ENCODE measurements at regions of chr19 and their contacts with region 1.

Region 1: DNA sequence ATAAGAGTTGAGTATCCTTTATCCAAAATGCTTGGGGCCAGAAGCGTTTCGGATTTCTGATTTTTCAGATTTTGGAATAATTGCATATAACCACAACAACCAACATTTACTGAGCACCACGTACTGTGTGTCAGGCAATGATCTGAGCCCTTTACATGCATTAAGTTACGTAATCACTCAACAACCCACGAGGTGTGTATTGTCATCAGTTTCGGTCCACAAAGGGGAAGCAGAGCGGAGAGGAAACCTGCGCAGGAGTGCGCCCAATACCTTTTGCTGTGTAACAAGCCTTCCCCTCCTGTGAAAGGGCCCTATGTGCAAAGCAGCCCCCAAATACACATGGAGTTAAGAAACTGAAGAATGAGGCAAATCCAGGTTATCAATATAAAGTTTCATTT is 20.7 kb upstream of the NLRP12 start:
- DNase-seq: peak in 1 of 9 experiments; percentile 32
- ATAC-seq: no peak
- H3K4me3 ChIP-seq: no peak overlapping the region
- H3K4me3 Mint-ChIP-seq: no peak overlapping the region
- H3K27ac ChIP-seq: no peak overlapping the region
- H3K27ac Mint-ChIP-seq: no peak overlapping the region
- H3K4me1 ChIP-seq: no peaks in the 10 kb centered on the region
- H3K4me1 Mint-ChIP-seq: peaks cover 5% of the 10 kb centered on the region
- H3K27me3 ChIP-seq: peaks cover 0 to under 1% of the 10 kb centered on the region in 2 experiments
- H3K27me3 Mint-ChIP-seq: peaks cover 21% of the 10 kb centered on the region
- CTCF ChIP-seq: no peak

Region 2: DNA sequence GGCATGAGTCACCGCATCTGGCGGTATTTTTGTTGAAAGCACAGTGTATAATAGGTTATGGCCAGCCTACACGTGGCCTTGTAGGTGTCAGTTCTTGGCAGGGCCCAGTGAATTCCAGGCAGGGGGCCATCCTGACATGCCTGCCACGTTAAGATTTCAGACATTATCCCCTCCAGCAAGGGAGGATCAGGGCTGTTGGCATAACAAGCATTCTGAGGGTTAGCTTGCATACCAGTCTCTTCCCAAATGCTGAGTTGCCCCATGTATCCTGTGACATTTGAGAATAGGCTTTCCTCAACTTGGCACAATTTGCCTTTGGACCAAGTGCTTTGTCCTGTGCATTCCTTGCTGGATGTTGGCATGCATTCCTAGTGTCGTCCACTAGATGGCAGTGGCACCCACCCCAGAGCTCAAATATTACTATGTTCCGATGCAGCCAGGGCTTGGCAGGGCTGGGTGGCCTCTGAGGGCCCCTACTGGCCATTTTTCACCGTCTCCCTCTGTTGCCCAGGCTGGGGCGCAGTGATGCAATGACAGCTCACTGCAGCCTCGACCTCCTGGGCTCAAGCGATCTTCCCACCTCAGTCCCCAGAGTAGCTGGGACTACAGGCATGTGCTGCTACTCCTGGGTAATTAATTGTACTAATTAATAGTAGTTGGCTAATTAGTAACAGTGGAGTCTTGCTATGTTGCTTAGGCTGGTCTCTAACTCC is 52.0 kb before region 1 on chr19:
- CTCF ChIA-PET with region 1: interaction called, 3 read pairs
- POLR2A ChIA-PET with region 1: no interaction called
- intact Hi-C with region 1: loop called in 1 of 2 experiments (anchors 1 kb)
- DNase-seq: peak; percentile 46 to 81 (median 68)
- ATAC-seq: peak; percentile 100
- H3K4me3 ChIP-seq: no peak overlapping the region
- H3K4me3 Mint-ChIP-seq: no peak overlapping the region
- H3K27ac ChIP-seq: no peak overlapping the region
- H3K27ac Mint-ChIP-seq: no peak overlapping the region
- H3K4me1 ChIP-seq: no peaks in the 10 kb centered on the region
- H3K4me1 Mint-ChIP-seq: no peaks in the 10 kb centered on the region
- H3K27me3 ChIP-seq: no peaks in the 10 kb centered on the region
- H3K27me3 Mint-ChIP-seq: peaks cover 2% of the 10 kb centered on the region
- CTCF ChIP-seq: peak; percentile 91

Region 3: DNA sequence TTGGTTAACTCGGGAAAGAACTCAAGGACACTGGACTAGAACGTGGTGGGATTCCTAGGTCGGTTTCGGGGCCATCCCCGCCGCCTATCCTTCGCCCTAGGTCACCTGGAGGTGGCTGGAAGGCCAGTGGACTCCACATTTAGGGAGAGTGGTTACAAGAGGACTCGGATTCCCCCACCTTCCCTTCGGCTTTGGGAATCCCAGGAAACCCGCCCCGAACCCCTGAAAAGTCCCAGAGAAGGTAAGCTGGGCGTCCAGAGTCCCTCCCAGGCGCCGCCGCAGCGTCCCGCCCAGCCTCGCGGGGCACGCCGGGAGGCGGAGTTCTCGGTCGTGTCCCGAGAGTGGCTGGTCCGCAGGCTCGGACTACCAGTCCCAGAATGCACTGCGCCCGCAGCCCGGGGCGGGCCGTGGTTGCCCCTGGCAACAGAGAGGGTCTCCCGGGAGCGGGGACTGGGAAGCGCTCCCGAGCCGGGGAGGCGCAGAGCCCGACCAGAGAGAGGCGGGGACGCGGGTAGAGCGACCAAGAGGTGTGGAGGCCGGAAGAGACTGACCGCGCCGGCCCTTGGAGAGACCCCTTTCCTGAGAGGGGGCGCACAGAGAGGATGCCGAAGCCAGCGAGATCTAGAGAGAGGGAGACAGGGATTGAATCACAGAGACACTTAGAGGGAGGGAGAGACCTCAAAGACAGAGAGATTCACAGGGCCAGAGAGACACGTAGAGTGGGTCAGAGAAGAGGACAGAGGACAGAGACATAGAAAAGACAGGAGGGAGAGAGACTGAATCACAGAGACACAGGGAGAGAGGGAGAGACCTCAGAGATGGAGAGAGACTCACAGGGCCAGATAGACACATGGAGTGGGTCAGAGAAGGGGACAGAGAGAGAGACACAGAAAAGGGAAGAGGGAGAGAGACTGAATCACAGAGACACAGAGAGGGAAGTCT is 34.6 kb after region 1 on chr19:
- CTCF ChIA-PET with region 1: interaction called, 8 read pairs
- POLR2A ChIA-PET with region 1: no interaction called
- intact Hi-C with region 1: loop called (anchors 1 kb)
- DNase-seq: peak; percentile 70 to 89 (median 79)
- ATAC-seq: peak; percentile 80
- H3K4me3 ChIP-seq: peak overlapping the region; percentile 53 to 55
- H3K4me3 Mint-ChIP-seq: no peak overlapping the region
- H3K27ac ChIP-seq: no peak overlapping the region
- H3K27ac Mint-ChIP-seq: no peak overlapping the region
- H3K4me1 ChIP-seq: peaks cover 76% of the 10 kb centered on the region
- H3K4me1 Mint-ChIP-seq: peaks cover 50% of the 10 kb centered on the region
- H3K27me3 ChIP-seq: peaks cover 36 to 39% of the 10 kb centered on the region in 2 experiments
- H3K27me3 Mint-ChIP-seq: peaks cover 11% of the 10 kb centered on the region
- CTCF ChIP-seq: no peak

Region 4: GRCh38 chr19:54029930-54030490 is 185.2 kb after region 1 on chr19:
- CTCF ChIA-PET with region 1: interaction called, 57 read pairs
- POLR2A ChIA-PET with region 1: no interaction called
- intact Hi-C with region 1: no loop called
- DNase-seq: peak in 8 of 9 experiments; percentile 32 to 66 (median 56)
- ATAC-seq: no peak
- H3K4me3 ChIP-seq: no peak overlapping the region
- H3K4me3 Mint-ChIP-seq: no peak overlapping the region
- H3K27ac ChIP-seq: no peak overlapping the region
- H3K27ac Mint-ChIP-seq: no peak overlapping the region
- H3K4me1 ChIP-seq: no peaks in the 10 kb centered on the region
- H3K4me1 Mint-ChIP-seq: no peaks in the 10 kb centered on the region
- H3K27me3 ChIP-seq: no peaks in the 10 kb centered on the region
- H3K27me3 Mint-ChIP-seq: peaks cover 24% of the 10 kb centered on the region
- CTCF ChIP-seq: peak; percentile 48

Region 5: DNA sequence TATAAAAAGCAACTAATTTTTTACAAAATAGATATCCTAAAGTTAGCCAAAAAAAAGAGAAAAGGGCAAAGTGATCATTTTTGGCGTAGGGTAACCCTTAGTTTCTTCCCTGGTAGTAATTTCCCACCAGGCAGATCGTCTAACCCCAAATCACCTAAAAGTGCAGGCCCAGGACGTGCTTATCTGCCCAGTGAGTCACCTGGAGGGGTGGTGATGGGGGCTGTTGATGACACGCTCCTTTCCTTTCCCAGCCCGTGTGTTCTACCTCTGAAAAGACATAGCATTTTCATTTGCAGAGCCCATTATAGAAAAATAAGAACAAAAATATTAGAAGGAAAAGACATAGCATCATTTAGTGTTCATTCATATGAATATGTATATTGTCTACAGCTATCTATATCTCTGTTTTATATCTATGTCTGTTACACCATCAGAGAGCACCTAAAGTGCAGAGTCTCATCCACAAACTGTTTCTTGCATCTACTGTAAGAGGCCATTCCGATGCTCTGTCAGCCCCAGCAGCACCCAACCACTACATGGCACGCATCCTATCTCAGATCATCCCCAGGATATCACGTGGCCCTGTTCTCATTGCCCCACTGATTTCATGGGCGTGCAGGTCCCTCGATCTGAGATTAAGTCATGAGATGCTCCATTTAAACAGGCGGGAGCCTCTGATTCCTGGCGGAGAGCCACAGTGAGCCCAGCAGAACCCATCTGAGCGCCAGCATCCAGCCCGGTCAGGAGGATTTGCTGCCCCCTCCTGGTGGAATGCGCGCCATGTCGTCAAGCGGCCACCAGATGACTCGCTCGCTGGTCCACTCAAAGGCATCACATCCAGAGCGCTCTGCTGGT is 386.5 kb after region 1 on chr19:
- CTCF ChIA-PET with region 1: no interaction called
- POLR2A ChIA-PET with region 1: no interaction called
- intact Hi-C with region 1: loop called in 1 of 2 experiments (anchors 1 kb)
- DNase-seq: peak; percentile 75 to 93 (median 87)
- ATAC-seq: peak; percentile 98
- H3K4me3 ChIP-seq: no peak overlapping the region
- H3K4me3 Mint-ChIP-seq: no peak overlapping the region
- H3K27ac ChIP-seq: no peak overlapping the region
- H3K27ac Mint-ChIP-seq: no peak overlapping the region
- H3K4me1 ChIP-seq: no peaks in the 10 kb centered on the region
- H3K4me1 Mint-ChIP-seq: no peaks in the 10 kb centered on the region
- H3K27me3 ChIP-seq: peaks cover 0 to 3% of the 10 kb centered on the region in 2 experiments
- H3K27me3 Mint-ChIP-seq: peaks cover 13% of the 10 kb centered on the region
- CTCF ChIP-seq: peak; percentile 96

Measured in CD8-positive, alpha-beta T cell (primary cell).